ENCODE measurements at regions of chr6 and their contacts with region 1.

Region 1: GRCh38 chr6:123415844-123416468 is 220.8 kb downstream of the TRDN start:
- DNase-seq: no peak
- H3K4me3 ChIP-seq: no peak overlapping the region
- H3K27ac ChIP-seq: peak overlapping the region; percentile 36
- H3K4me1 ChIP-seq: peaks cover 27% of the 10 kb centered on the region
- H3K27me3 ChIP-seq: no peaks in the 10 kb centered on the region
- CTCF ChIP-seq: peak; percentile 76

Region 2: DNA sequence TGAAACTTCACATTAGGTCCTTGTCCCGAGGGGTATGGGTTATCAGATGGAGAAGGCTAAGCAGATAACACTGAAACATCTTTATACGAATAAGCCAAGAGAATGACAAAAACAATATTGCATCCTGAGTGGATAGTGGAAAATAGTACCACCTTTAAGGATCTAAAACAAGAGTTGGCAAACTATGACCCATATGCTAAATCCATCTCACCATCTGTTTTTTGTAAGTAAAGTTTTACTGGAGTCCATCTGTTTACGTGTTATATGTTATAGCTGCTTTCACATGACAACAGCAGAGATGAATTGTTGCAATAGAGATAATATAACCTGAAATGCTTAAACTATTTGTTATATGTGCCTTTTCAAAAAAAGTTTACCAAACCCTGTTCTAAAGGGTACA is 296.9 kb after region 1 on chr6:
- intact Hi-C with region 1: loop called (anchors 5 kb)
- DNase-seq: no peak
- H3K4me3 ChIP-seq: no peak overlapping the region
- H3K27ac ChIP-seq: no peak overlapping the region
- H3K4me1 ChIP-seq: peaks cover 4% of the 10 kb centered on the region
- H3K27me3 ChIP-seq: no peaks in the 10 kb centered on the region
- CTCF ChIP-seq: no peak

Measured in left ventricle myocardium inferior (tissue), 1 donor.